ENCODE measurements at regions of chr13 and their contacts with region 1.

Region 1: DNA sequence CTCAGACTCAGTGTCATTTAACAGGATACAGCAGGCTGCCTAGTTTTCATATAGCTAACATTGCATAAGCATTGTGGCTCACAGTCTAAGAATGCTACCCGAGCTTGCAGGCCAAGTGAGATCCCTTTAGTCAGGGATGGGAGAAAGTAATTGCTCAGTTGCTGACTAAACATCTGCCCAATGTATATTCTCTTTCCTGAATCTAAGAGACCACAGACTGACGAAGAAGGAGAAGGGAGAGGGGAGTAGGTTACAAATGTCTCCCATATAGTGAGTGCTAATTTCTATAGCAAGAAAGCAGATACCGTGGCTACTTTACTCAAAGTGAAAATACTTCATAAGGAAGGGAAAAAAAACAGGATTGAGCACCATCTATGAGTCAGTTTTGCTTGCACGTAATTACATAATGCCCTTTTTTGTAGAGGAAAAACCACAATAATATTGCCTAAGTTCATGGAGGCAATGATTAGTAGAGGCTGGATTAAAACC is 453.9 kb downstream of the COG6 start:
- DNase-seq: peak; percentile 51
- H3K4me3 Mint-ChIP-seq: no peak overlapping the region
- H3K27ac Mint-ChIP-seq: peak overlapping the region; percentile 18
- H3K4me1 Mint-ChIP-seq: peaks cover 33% of the 10 kb centered on the region
- H3K27me3 Mint-ChIP-seq: no peaks in the 10 kb centered on the region

Region 2: DNA sequence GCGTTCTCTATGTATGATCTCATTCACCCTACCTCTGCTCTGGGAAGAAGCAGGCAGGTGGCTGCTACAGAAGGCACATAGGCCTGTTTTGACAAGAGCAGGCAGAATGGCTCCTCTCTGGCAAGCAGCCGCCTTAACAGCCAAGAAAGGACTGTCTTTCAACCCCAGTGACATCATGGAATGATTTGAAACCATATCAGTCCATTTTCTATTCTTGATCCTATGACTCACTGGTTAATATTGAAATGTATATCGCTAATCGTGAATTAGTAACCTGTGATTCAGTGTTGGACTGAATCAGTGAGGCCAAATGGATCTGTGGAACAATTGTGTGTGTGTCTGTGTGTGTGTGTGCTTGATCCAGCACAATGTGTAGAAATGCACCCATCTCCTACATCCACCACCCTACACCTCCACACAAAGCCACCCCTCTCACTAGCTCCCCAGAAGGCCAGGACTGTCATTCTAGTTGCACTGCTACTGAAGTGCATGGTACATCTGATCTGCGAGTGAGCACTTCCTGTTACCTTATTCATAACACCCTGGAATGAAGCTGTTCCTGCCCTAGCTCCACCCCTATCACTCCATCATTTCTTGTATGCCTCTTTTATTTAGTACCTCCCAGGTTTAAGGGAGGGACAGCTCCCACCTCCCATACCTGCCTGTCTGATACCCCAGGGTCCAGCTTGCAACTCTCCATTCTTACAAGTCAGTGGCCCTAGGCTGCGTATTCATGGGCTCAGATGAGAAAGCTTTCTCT is 97.0 kb after region 1 on chr13:
- CTCF ChIA-PET with region 1: no interaction called
- POLR2A ChIA-PET with region 1: no interaction called
- intact Hi-C with region 1: loop called (anchors 1 kb)
- DNase-seq: peak; percentile 68
- H3K4me3 Mint-ChIP-seq: peak overlapping the region; percentile 60
- H3K27ac Mint-ChIP-seq: peak overlapping the region; percentile 99
- H3K4me1 Mint-ChIP-seq: peaks cover 52% of the 10 kb centered on the region
- H3K27me3 Mint-ChIP-seq: no peaks in the 10 kb centered on the region

Measured in activated CD4-positive, alpha-beta memory T cell treated with anti-CD3 and anti-CD28 coated beads for 36 hours (primary cell).